Dorsolateral prefrontal cortex (tissue), 120 donors: ENCODE measurements at regions of chr6 and their contacts with region 1.

Region 1: DNA sequence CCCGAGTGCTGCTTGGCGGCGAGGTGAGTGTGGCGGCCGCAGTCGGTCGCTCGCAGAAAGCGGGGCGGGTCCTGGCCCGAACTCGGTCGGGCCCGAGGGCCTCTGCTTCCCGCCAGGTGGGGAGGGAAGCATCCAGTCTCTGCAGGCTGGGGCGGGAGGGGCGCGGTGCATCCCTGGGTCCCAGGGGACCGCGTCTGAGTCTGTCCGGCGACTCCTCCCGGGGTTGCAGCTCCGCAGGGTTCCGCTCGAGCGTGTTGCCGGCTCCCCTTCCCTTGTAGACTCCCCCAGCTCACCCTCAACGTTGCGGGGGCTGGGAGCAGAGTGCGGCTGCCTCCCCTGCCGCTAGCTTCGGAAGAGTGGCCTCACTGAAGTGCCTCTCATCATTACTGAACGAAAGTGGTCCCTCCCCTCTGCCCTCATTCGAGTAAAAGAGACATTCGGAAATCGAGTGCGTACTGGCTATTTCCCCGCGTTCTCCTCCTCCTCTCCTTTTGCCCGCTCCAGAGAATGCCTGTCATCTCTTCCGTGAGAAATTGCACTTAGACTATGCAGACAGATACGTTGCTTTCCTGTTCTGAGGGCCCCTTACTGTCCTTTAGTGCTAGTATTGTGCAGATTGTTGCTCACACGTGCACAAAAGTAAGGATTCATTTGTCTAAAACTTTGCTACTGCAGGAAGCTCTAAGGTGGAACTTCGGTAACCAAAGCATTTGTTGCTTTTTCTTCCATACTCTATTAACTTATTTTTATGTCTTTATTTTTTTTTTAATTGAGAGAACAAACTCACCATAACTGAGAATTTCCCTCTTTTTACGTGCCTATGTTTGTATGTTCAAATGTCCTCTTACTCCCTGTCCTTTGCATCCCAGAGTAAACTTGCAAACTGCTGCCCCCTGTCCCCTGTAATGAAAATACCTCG is 751 bp downstream of the MAP3K4 start:
- DNase-seq: peak in 9 of 10 donors; percentile 29 to 61 (median 46)
- H3K4me3 ChIP-seq: peak overlapping the region; percentile 57 to 98 (median 92)
- H3K27ac ChIP-seq: peak overlapping the region; percentile 73 to 98 (median 93)
- H3K27me3 ChIP-seq: no peaks in the 10 kb centered on the region
- CTCF ChIP-seq: peak in 54 of 56 donors; percentile 26 to 72 (median 56)

Region 2: GRCh38 chr6:161333410-161333809 is 341.1 kb after region 1 on chr6:
- intact Hi-C with region 1: loop called in 1 of 2 experiments (anchors 5 kb)
- DNase-seq: no peak
- H3K4me3 ChIP-seq: no peak overlapping the region
- H3K27ac ChIP-seq: no peak overlapping the region
- H3K27me3 ChIP-seq: no peaks in the 10 kb centered on the region
- CTCF ChIP-seq: no peak